Left colon (tissue), 2 donors: ENCODE measurements at regions of chr3 and their contacts with region 1.

Region 1: DNA sequence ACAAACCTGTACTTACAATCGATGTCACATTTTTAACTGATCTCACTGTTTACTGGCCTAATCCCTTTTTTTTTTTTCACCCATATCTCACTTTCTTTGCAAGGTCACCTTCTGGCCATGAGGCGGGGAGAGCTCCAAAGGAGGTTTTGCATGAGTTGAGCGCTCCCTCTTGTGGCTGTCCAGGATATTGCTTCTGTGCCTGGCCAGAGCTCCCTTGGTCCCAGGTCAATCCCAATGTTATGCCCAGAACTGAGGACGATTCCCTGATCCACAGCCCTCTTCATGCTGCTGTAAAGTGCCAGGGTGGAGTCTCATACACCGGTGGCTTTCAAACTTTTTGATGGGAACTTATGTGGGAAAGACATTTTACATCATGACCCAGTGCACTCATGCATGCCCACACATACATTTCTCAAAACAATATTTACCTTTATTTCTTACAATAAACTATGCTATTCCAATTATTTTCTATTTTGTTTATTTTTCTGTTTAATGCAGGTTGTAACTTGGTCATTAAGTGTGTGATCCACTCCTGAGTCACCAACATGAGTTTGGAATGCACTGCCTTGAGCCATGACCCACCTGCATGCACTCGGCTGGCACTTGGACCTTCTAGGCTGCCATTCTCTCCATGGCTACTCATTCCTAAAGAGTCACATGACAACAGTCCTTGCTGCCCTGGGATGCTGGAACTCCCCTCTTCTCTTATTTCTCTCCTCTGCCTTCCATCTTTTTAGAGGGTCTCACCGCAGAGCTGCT is 9.6 kb upstream of the SST start:
- DNase-seq: peak; percentile 49 to 78
- ATAC-seq: peak; percentile 95

Region 2: GRCh38 chr3:187227658-187228258 is 452.1 kb before region 1 on chr3:
- intact Hi-C with region 1: loop called in 1 of 2 experiments (anchors 10 kb)
- DNase-seq: no peak
- ATAC-seq: no peak